ENCODE measurements at regions of chr3 and their contacts with region 1.

Region 1: GRCh38 chr3:23805633-23806533 is at the start of gene UBE2E1:
- DNase-seq: no peak
- H3K4me3 ChIP-seq: peak within 1 kb of the TSS; percentile 93 to 98 (median 95)
- H3K27ac ChIP-seq: peak within 1 kb of the TSS; percentile 93 to 96 (median 94)
- H3K4me1 ChIP-seq: peaks cover 29 to 39% (median 36%) of the 10 kb centered on the region in 4 donors
- H3K27me3 ChIP-seq: no peaks in the 10 kb centered on the region
- CTCF ChIP-seq: peak in 1 of 3 experiments; percentile 10
- EP300 ChIP-seq: no peak
- POLR2A ChIP-seq: no peak
- total RNA-seq, gene UBE2E1: 82.4 to 126 (median 115) TPM

Region 2: GRCh38 chr3:23202921-23203707 is 602.8 kb before region 1 on chr3 and contains the start of gene UBE2E2:
- intact Hi-C with region 1: loop called (anchors 5 kb)
- DNase-seq: no peak
- H3K4me3 ChIP-seq: peak within 1 kb of the TSS; percentile 83 to 99 (median 96)
- H3K27ac ChIP-seq: peak within 1 kb of the TSS; percentile 82 to 93 (median 88)
- H3K4me1 ChIP-seq: peaks cover 17 to 33% (median 27%) of the 10 kb centered on the region in 4 donors
- H3K27me3 ChIP-seq: no peaks in the 10 kb centered on the region
- CTCF ChIP-seq: no peak
- EP300 ChIP-seq: no peak
- POLR2A ChIP-seq: peak; percentile 19
- total RNA-seq, gene UBE2E2: 53.5 to 143 (median 90.3) TPM

Region 3: DNA sequence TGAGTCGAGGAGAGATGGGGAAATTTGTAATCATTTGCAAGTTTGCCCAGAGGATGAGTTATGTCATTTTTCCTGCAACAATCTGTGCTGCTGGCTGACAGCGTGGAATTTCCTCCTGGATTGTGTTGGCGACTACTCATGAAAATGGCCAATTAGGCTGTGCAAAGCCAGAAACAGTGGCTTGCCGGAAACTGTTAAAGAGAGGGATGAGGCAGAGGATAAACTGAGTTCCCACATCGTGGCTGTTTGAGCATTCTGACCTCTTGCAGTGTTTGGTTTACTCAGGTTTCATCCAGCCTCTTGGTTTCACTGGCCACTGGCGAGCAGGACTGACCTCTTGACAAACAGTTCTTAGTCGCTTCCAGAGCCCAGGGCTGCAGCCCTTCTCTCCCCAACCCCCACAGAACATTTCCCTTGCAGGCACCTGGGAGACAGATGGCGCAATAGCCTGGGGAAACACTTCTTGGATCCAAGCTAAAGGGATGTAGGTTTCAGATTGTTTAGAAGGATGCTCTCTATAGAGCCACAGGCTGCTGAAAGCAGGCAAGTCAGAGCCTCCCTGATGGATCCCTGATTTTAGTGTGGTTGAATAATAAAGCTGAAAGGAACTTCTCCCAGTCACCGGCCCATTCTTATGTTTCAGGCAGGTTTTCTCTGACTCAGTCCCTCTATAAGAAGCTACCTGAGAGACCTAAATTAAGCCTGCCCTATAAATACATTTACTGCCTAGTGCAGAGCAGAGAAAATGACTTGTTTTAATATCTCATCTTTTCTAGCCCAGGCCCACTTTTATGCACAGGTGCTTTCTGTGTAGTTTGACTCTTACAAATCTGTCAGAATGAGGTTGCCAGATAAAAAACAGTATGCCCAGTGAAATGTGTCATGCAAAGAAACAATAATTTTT is 93.0 kb before region 1 on chr3:
- intact Hi-C with region 1: loop called (anchors 10 kb)
- DNase-seq: no peak
- H3K4me3 ChIP-seq: peak overlapping the region in 2 of 4 donors; percentile 13 to 16
- H3K27ac ChIP-seq: peak overlapping the region; percentile 2 to 66 (median 31)
- H3K4me1 ChIP-seq: peaks cover 7 to 33% (median 28%) of the 10 kb centered on the region in 4 donors
- H3K27me3 ChIP-seq: no peaks in the 10 kb centered on the region
- CTCF ChIP-seq: peak; percentile 26 to 33 (median 32)
- EP300 ChIP-seq: no peak
- POLR2A ChIP-seq: no peak

Measured in esophagus muscularis mucosa (tissue), 4 donors.